ENCODE measurements at regions of chr17 and their contacts with region 1.

Region 1: DNA sequence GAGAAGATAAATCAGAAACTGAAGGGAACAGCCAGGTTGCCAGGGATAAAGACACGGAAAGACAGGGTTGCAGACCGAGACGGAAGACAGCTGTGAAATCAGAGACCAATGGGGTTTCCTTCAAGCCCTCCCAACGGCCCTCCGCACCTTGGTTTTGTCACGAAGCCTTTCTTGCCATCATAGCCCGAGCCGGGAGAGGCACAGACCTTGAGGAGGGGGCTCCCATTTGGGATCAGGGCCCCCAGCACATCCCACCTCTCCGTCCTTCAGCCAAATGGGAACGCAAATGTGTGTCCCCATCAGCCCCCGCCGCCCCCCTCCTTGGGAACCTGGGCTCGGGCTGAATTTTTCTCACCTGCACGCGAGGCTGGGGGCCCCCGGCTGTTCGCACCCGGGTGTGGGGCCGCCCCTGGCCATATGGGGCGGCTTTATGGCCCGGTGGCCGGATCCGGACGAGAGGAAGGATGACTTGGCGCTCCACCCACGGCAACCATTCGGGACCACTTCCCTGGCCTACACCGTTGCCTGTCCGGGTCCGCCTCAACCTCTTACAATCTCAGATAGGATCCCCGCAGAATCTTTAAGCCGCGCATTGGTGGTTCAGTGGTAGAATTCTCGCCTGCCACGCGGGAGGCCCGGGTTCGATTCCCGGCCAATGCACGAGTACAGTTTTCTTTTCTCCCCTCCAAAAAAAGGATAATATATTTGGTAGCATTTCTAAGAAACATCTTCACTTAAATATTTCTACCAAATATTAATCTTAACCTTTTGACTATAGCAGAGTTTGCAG is 1.4 kb upstream of the HES7 start:
- DNase-seq: peak; percentile 79 to 85 (median 82)
- H3K4me3 ChIP-seq: peak overlapping the region; percentile 40 to 77 (median 47)
- H3K4me3 Mint-ChIP-seq: peak overlapping the region; percentile 86 to 97
- H3K27ac ChIP-seq: no peak overlapping the region
- H3K27ac Mint-ChIP-seq: peak overlapping the region in 1 of 7 donors; percentile 64
- H3K4me1 ChIP-seq: peaks cover 64 to 70% of the 10 kb centered on the region in 2 donors
- H3K4me1 Mint-ChIP-seq: peaks cover 62% of the 10 kb centered on the region
- H3K27me3 ChIP-seq: peaks cover 52 to 87% of the 10 kb centered on the region in 2 donors
- H3K27me3 Mint-ChIP-seq: peaks cover 89 to 97% (median 91%) of the 10 kb centered on the region in 3 donors
- CTCF ChIP-seq: no peak

Region 2: DNA sequence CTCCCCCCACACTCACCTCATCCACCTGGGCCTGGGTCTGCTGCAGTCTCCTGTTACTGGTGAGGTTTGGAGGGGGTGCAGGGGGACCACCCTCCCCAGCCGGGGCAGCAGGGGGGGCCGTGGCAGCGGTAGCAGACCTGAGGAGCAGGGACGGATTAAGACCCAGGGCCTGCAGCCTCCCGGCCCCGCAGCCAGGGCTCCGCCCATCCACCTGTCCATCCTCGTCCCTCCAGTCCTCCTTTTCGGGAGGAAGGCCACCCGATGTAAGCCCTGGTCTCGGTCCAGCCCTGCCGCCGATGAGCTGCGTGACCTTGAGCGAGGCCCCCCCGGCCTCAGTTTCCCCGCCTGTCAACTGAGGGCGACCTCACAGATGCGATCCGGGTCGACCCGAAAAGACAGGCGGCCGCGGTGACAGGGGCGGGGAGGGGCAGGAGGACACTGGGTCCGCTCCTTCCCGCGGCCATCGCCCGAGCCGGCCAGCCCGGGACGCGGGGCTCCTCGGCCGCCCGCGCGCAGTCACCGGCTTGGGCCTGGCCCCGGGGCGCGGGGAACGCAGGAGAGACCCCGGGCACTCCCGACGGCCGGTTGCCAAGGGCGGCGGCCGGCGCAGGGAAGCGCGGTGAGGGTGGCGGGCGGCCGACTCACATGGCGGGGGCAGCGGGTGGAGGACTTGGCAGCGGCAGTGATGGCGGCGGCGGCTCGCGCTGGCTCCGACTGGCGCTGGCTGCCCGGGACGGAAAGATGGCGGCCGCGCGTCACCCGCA is 37.1 kb after region 1 on chr17 and contains the start of gene VAMP2:
- intact Hi-C with region 1: loop called (anchors 5 kb)
- DNase-seq: peak; percentile 54 to 79 (median 71)
- H3K4me3 ChIP-seq: peak within 1 kb of the TSS; percentile 86 to 98 (median 95)
- H3K4me3 Mint-ChIP-seq: peak within 1 kb of the TSS; percentile 82 to 88
- H3K27ac ChIP-seq: peak within 1 kb of the TSS; percentile 74 to 94
- H3K27ac Mint-ChIP-seq: peak within 1 kb of the TSS in 6 of 7 donors; percentile 86 to 98 (median 96)
- H3K4me1 ChIP-seq: peaks cover 45 to 71% of the 10 kb centered on the region in 2 donors
- H3K4me1 Mint-ChIP-seq: peaks cover 59% of the 10 kb centered on the region
- H3K27me3 ChIP-seq: no peaks in the 10 kb centered on the region
- H3K27me3 Mint-ChIP-seq: no peaks in the 10 kb centered on the region
- CTCF ChIP-seq: no peak
- polyA plus RNA-seq, gene VAMP2: 10.2 to 139 (median 14.5) TPM

Region 3: GRCh38 chr17:8408371-8408770 is 283.0 kb after region 1 on chr17:
- intact Hi-C with region 1: no loop called
- DNase-seq: no peak
- H3K4me3 ChIP-seq: no peak overlapping the region
- H3K4me3 Mint-ChIP-seq: no peak overlapping the region
- H3K27ac ChIP-seq: no peak overlapping the region
- H3K27ac Mint-ChIP-seq: peak overlapping the region in 1 of 7 donors; percentile 23
- H3K4me1 ChIP-seq: peaks cover 25 to 34% of the 10 kb centered on the region in 2 donors
- H3K4me1 Mint-ChIP-seq: peaks cover 32% of the 10 kb centered on the region
- H3K27me3 ChIP-seq: no peaks in the 10 kb centered on the region
- H3K27me3 Mint-ChIP-seq: peaks cover 0 to 8% (median 8%) of the 10 kb centered on the region in 3 donors
- CTCF ChIP-seq: no peak

Measured in CD14-positive monocyte (primary cell).